ENCODE measurements at regions of chr16 and their contacts with region 1.

Region 1: DNA sequence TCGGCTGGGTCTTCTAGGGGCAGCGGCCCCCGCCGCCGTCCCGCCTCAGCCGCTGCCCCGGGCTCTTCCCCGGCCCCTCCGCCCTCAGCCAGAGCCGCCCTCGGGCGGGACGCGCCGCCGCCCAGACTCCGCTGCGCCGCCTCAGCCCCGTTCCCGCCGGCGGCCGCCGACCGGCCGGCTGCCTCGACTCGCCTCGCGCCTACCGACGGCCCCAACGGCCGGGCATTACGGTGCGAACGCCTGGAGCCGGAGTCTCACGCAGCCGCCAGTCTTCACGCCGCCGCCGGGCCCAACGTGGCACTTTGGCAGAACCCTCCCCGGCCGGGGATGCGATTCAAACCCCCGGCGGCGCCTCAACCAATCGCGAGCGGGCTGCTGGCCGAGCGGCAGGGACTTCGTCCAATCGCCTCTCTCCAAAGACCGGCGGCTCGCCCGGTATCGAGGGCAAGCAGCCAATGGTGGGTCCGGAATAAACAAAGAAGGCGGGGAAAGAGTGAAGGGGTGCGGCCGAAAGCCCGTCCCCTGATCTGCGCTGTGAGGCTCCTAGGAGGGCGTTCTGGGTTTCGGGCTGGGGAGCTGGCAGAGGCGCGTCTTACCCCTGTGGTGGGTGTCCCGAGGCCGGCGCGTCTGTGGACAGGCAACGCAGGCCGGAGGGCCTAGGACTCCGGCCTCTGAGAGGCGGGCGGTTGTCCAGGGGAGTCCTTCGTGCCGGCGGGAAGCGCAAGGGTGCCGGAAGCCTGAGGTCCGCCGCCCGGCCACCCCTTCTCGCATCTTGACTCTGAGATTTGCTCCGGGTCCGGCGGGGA is at the start of gene CDR2:
- DNase-seq: peak; percentile 74
- H3K4me3 ChIP-seq: peak within 1 kb of the TSS; percentile 50
- H3K27me3 ChIP-seq: no peaks in the 10 kb centered on the region
- CTCF ChIP-seq: no peak
- polyA plus RNA-seq, gene CDR2: 41.5 and 44.4 TPM in 2 replicates

Region 2: DNA sequence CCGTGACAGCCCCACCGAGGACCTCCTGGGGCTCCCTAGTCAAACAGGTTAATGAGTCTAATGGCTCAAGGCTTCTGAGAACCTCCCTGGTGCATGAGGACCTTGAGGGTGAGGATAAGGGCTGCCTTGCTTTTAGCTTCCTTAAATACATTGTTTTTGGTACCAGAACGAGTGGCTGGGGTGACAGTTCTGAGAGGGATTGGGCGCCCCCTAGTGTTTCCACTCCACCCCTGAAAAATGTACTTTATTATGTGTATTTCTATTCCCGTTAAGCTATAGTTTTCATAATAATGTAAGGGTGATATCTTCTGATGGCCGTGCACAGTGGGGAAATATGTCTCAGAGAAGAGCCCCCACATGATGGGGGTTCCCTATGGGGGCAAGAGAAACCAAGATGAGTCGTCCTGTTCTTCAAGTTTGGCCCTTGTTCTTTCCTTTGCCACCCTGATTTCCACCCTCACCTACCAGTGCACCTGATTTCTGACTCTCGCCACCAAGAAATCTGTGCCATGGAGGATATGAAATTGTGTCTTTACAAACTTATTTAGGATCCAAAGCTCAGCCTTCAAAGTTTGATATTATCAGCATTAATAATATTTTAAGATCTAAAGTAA is 296.7 kb before region 1 on chr16:
- CTCF ChIA-PET with region 1: no interaction called
- POLR2A ChIA-PET with region 1: no interaction called
- DNase-seq: no peak
- H3K4me3 ChIP-seq: no peak overlapping the region
- H3K27me3 ChIP-seq: no peaks in the 10 kb centered on the region
- CTCF ChIP-seq: peak; percentile 85

Region 3: GRCh38 chr16:22353933-22354541 is 20.5 kb before region 1 on chr16:
- CTCF ChIA-PET with region 1: interaction called, 3 read pairs
- POLR2A ChIA-PET with region 1: interaction called, 12 read pairs
- DNase-seq: no peak
- H3K4me3 ChIP-seq: no peak overlapping the region
- H3K27me3 ChIP-seq: no peaks in the 10 kb centered on the region
- CTCF ChIP-seq: no peak